ENCODE measurements at regions of chr7 and their contacts with region 1.

Region 1: DNA sequence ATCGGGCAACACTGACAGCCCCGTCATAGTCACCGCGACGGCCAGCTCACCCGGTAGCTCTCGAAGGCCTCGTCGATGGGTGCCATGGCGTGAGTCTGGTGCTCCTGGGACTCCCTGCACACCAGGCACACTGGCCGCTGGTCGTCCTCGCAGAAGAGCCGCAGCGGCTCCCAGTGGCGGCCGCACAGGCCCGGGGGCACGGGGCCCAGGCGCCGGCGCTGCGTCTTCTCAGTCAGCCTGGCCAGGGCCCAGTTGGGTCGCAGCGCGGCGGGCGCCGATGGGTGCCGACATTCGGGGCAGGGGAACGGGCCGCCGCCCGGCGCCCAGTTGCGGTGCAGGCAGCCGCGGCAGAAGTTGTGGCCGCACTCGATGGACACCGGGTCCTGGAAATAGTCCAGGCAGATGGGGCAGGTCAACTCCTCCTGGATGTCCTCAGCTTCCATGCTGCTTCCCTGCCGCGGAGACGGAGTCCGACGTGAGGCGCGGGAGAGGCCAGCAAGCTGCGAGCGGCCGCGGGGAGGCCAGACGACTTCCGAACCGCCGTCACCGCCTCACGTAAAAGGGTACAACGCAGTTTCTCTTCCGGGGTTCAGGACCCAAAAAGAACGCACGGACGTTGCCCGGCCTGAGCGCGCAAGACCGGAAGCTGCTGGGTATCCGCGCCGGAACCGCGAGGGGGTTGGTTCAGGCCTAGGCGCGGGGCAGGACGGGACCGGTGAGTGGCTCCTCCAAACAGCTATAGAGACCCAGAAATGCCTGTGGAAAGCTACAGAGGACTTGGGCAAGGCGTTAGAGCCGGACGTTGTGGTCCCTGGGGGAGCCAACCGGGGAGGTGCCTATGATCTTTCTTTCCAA is at the start of gene TRIM4:
- DNase-seq: peak; percentile 95
- ATAC-seq: peak; percentile 97 to 99 (median 98)
- H3K4me3 ChIP-seq: peak within 1 kb of the TSS; percentile 97
- H3K27ac ChIP-seq: peak within 1 kb of the TSS; percentile 96
- H3K4me1 ChIP-seq: peaks cover 26% of the 10 kb centered on the region
- H3K27me3 ChIP-seq: no peaks in the 10 kb centered on the region
- CTCF ChIP-seq: peak; percentile 32
- total RNA-seq, gene TRIM4: 4.4 to 8.9 (median 6.1) TPM

Region 2: GRCh38 chr7:99631295-99632109 is 287.7 kb before region 1 on chr7:
- intact Hi-C with region 1: loop called (anchors 5 to 10 kb)
- DNase-seq: peak in 1 of 2 donors; percentile 78
- ATAC-seq: peak; percentile 94 to 99 (median 98)
- H3K4me3 ChIP-seq: no peak overlapping the region
- H3K27ac ChIP-seq: peak overlapping the region; percentile 79
- H3K4me1 ChIP-seq: peaks cover 11% of the 10 kb centered on the region
- H3K27me3 ChIP-seq: no peaks in the 10 kb centered on the region
- CTCF ChIP-seq: peak; percentile 59

Region 3: GRCh38 chr7:99985444-99985843 is 66.3 kb after region 1 on chr7:
- intact Hi-C with region 1: loop called (anchors 5 kb)
- DNase-seq: no peak
- ATAC-seq: no peak
- H3K4me3 ChIP-seq: no peak overlapping the region
- H3K27ac ChIP-seq: no peak overlapping the region
- H3K4me1 ChIP-seq: no peaks in the 10 kb centered on the region
- H3K27me3 ChIP-seq: no peaks in the 10 kb centered on the region
- CTCF ChIP-seq: no peak

Region 4: GRCh38 chr7:100049441-100050311 is 130.5 kb after region 1 on chr7 and contains the start of gene ZSCAN21:
- intact Hi-C with region 1: loop called in 1 of 2 experiments (anchors 10 kb)
- DNase-seq: peak; percentile 90 to 94
- ATAC-seq: peak; percentile 95 to 98 (median 96)
- H3K4me3 ChIP-seq: peak within 1 kb of the TSS; percentile 94
- H3K27ac ChIP-seq: peak within 1 kb of the TSS; percentile 98
- H3K4me1 ChIP-seq: peaks cover 6% of the 10 kb centered on the region
- H3K27me3 ChIP-seq: no peaks in the 10 kb centered on the region
- CTCF ChIP-seq: no peak
- total RNA-seq, gene ZSCAN21: 9.9 to 20.3 (median 11.7) TPM

Measured in psoas muscle (tissue), 8 donors.